Activated T-helper 1 cell treated with anti-CD3 and anti-CD28 coated beads, Interleukin-12 subunit alpha, Interleukin-12 subunit beta, Interleukin-2, Interleukin-4 antibody, amounts not matched to agents 30 ng/mL and 10 ng/mL and 1 ng/mL, durations not matched to agents 14 hours and 24 hours and 36 hours (primary cell): ENCODE measurements at regions of chr3 and their contacts with region 1.

Region 1: DNA sequence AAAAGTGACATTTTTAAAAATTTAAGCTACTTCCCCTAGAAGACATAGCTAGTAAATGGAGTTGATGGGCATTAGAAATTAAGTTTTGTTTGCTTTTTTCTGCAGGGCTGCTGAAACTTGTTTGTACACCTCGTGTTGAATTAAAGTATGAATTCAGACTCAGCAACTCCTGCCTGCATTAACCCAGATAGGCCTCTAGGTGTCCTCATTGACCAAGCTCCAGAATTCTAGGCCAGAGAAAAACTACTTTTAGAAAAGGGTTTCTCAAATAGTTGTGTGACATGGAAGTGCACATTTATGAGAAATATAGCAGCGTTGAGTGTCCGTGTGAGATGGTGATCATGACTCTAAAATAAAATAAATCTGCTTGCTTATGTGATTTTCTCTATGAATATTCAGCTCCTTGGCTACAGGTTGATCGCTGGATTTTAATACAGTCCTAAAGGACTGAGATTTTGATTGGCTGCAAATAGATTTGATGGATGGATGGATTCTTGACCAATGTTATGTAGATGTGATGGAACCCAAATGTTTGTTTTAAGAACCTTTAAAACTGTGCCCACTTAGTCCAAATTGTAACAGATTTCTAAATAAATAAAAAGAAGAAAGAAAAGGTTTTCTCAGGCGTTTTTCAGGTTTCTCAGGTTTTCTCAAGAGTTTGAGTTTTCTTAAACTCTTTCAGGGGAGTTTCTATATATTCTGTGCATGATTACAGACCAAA is 39.4 kb upstream of the LMOD3 start:
- DNase-seq: peak; percentile 34
- H3K4me3 Mint-ChIP-seq: no peak overlapping the region
- H3K27ac Mint-ChIP-seq: peak overlapping the region; percentile 6
- H3K4me1 Mint-ChIP-seq: peaks cover 8% of the 10 kb centered on the region
- H3K27me3 Mint-ChIP-seq: peaks cover 2% of the 10 kb centered on the region

Region 2: GRCh38 chr3:69051756-69052471 is 109.8 kb before region 1 on chr3 and contains the start of gene TMF1:
- intact Hi-C with region 1: no loop called
- DNase-seq: peak; percentile 96
- H3K4me3 Mint-ChIP-seq: peak within 1 kb of the TSS; percentile 97
- H3K27ac Mint-ChIP-seq: peak within 1 kb of the TSS; percentile 96
- H3K4me1 Mint-ChIP-seq: peaks cover 56% of the 10 kb centered on the region
- H3K27me3 Mint-ChIP-seq: peaks cover 1% of the 10 kb centered on the region
- total RNA-seq, gene TMF1: 43.0 and 43.1 TPM in 2 replicates

Region 3: GRCh38 chr3:69092030-69092516 is 69.7 kb before region 1 on chr3:
- intact Hi-C with region 1: no loop called
- DNase-seq: no peak
- H3K4me3 Mint-ChIP-seq: peak overlapping the region; percentile 84
- H3K27ac Mint-ChIP-seq: peak overlapping the region; percentile 98
- H3K4me1 Mint-ChIP-seq: peaks cover 83% of the 10 kb centered on the region
- H3K27me3 Mint-ChIP-seq: no peaks in the 10 kb centered on the region

Region 4: DNA sequence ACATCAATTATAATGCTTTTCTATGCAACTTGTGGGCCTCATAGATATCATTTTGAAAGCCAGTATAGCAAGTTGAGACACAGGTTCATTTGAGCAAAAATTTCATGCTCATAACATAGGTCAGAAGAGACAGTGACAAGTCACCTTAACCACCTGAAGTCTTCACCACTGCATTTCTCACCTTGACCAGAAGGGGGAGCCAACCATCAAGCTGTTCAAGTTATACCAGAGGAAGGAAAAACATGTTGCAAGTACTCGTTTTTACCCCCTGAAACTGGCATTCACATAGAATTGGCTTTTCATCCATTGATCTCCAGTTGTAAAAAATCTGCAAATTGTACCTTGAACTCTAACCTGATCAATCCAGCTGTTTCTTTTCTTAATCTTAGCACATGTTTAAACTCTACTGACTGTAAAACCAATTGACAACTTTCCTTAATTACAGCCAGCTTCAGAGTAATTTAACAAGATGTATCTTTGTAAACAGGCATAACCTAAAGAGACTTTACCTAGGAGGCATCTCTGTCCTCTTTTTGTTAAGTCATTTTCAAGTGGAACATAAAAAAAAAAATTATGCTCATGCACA is 40.8 kb before region 1 on chr3:
- intact Hi-C with region 1: loop called (anchors 1 kb)
- DNase-seq: peak; percentile 71
- H3K4me3 Mint-ChIP-seq: no peak overlapping the region
- H3K27ac Mint-ChIP-seq: no peak overlapping the region
- H3K4me1 Mint-ChIP-seq: peaks cover 7% of the 10 kb centered on the region
- H3K27me3 Mint-ChIP-seq: peaks cover 7% of the 10 kb centered on the region

Region 5: GRCh38 chr3:69410250-69410649 is 248.5 kb after region 1 on chr3:
- intact Hi-C with region 1: loop called (anchors 1 kb)
- DNase-seq: peak; percentile 57
- H3K4me3 Mint-ChIP-seq: no peak overlapping the region
- H3K27ac Mint-ChIP-seq: no peak overlapping the region
- H3K4me1 Mint-ChIP-seq: peaks cover 11% of the 10 kb centered on the region
- H3K27me3 Mint-ChIP-seq: peaks cover 9% of the 10 kb centered on the region

Region 6: DNA sequence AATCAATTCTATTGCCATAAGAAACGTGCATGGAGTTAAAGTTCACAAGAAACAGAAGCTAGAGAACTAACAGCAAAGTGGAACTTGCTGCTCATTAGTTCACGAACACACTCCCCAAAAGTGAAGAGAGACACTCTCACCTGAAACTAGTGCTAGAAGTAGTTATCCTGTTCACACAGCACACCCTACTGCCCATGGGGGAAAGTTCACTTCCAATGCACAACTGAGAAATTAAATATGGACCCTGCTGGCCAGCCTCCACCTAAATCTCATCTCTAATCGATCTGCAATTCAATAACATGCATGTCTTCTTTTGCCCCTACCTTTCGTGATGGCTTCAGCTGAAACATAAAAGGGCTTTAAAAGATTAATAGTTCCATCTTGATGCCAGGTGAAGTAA is 263.5 kb after region 1 on chr3:
- intact Hi-C with region 1: loop called (anchors 1 kb)
- DNase-seq: peak; percentile 2
- H3K4me3 Mint-ChIP-seq: no peak overlapping the region
- H3K27ac Mint-ChIP-seq: no peak overlapping the region
- H3K4me1 Mint-ChIP-seq: peaks cover 5% of the 10 kb centered on the region
- H3K27me3 Mint-ChIP-seq: no peaks in the 10 kb centered on the region

Region 7: GRCh38 chr3:69433969-69434325 is 272.2 kb after region 1 on chr3:
- intact Hi-C with region 1: loop called (anchors 2 kb)
- DNase-seq: no peak
- H3K4me3 Mint-ChIP-seq: no peak overlapping the region
- H3K27ac Mint-ChIP-seq: peak overlapping the region; percentile 54
- H3K4me1 Mint-ChIP-seq: peaks cover 51% of the 10 kb centered on the region
- H3K27me3 Mint-ChIP-seq: no peaks in the 10 kb centered on the region

Region 8: DNA sequence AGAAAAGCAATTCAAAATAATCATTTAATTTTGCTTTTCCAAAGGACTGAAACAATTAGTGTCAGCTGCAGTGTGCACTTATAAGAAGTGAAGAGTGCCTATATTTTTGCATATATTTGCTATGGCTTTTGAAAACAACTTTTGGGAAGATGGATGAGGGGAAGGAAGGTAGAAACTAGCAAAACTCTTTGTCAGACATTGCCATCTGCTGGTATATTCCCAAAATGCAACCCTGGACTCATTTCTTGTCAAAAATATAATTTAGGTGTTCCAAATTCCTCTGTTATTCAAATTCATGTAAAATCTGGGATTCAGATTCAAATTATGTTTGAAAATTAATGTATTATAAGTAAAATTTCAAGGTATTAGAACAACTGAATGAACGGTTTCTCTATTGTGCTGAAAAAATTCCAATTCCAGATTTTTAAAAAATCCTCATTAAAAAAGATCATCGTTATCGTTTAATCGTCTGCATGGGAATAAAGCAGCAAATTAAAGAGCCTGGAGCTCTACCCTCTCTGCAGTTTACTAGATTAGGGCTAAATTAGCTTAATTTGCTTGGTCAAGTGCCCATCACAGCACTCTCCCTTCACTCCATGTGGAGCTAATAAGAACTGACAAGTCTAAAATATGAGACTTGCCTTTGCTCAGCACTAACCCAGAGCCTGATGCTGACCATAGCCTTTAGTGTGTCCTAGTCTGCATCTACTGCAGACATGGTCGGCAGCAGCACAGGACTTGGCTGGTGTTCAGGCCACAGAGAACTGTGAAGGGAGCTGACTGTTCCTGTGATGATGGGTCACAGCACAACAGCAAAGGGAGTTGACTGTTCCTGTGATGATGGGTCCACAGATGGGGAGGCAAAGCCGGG is 509.6 kb after region 1 on chr3:
- intact Hi-C with region 1: loop called (anchors 1 kb)
- DNase-seq: no peak
- H3K4me3 Mint-ChIP-seq: no peak overlapping the region
- H3K27ac Mint-ChIP-seq: no peak overlapping the region
- H3K4me1 Mint-ChIP-seq: no peaks in the 10 kb centered on the region
- H3K27me3 Mint-ChIP-seq: no peaks in the 10 kb centered on the region

Region 9: DNA sequence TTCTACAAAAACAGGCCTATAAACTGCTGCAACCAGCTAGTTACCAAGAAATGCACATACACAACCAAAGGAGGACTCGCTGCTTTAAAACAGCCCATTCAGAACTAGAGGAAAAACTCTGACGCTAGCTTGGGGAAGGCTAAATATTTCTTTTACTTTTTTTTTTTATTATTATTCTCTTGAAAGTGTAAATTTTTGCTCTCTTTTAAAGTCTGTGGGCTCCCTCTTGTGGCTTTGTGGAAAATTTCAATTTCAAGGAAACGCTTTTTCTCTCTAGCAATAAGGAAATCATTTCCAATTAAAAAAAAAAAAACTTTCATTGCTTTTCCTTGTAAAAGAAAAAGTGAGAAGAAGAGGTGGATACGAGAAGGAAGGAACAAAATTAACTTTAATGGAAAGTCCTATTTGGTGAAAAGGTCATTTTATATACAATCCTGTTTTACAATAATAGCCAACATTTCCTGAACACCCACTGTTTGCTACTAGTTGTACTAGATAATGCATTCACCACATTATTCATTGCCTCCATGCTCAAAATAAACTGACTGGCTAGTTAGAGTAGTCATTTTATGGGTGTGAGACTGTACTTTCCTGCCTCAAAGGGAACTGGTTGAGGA is 786.6 kb after region 1 on chr3:
- intact Hi-C with region 1: loop called (anchors 1 kb)
- DNase-seq: no peak
- H3K4me3 Mint-ChIP-seq: no peak overlapping the region
- H3K27ac Mint-ChIP-seq: no peak overlapping the region
- H3K4me1 Mint-ChIP-seq: no peaks in the 10 kb centered on the region
- H3K27me3 Mint-ChIP-seq: peaks cover 5% of the 10 kb centered on the region